SK-N-SH (cell line): ENCODE measurements at regions of chr10 and their contacts with region 1.

Region 1: DNA sequence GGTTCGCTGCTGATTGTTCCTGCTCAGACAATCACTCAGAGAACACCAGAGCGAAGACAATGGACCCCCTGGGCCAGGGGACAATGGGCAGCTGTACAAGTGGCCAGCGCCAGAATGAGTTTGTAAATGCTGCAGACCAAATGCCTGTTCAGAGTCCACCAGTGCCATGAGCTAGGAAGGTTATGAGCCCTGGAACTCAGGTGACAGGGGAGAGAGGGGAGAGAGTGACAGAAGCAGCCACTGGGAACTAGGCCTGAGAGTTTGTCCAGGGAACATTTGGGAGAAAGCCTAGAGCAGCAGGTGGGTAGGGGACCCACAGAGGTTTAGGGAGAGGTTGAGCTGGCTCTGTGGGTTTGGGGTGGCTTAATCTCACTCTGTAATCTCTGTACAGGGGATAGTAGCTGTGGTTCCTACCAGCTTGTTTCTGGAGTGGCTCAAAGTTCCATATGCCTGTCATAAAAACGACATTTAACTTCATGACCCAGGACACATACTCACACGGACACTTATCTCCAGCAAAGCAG is 60.4 kb downstream of the C10orf105 start:
- DNase-seq: peak; percentile 61
- H3K4me3 ChIP-seq: no peak overlapping the region
- H3K27ac ChIP-seq: peak overlapping the region in 1 of 2 experiments; percentile 22; a peak in 1 of 4 replicates
- H3K4me1 ChIP-seq: peaks cover 0 to 18% of the 10 kb centered on the region in 2 experiments; a peak in 1 of 4 replicates
- H3K27me3 ChIP-seq: peaks cover 12% of the 10 kb centered on the region; the same call in 1 of the 2 replicates
- CTCF ChIP-seq: no peak
- EP300 ChIP-seq: peak in 1 of 2 experiments; percentile 64; a peak in 1 of 4 replicates
- RAD21 ChIP-seq: no peak

Region 2: GRCh38 chr10:71647526-71648253 is 11.5 kb before region 1 on chr10:
- CTCF ChIA-PET with region 1: interaction called, 24 read pairs
- POLR2A ChIA-PET with region 1: no interaction called
- DNase-seq: peak; percentile 71
- H3K4me3 ChIP-seq: no peak overlapping the region
- H3K27ac ChIP-seq: no peak overlapping the region
- H3K4me1 ChIP-seq: peaks cover 0 to 20% of the 10 kb centered on the region in 2 experiments; a peak in 1 of 4 replicates
- H3K27me3 ChIP-seq: no peaks in the 10 kb centered on the region; the same call in none of the 2 replicates
- CTCF ChIP-seq: peak; percentile 45
- EP300 ChIP-seq: no peak
- RAD21 ChIP-seq: peak; percentile 37